IMR-90 (cell line): ENCODE measurements at regions of chr4 and their contacts with region 1.

Region 1: GRCh38 chr4:118417325-118417724 is 64.5 kb upstream of the PRSS12 start:
- DNase-seq: peak; percentile 85
- ATAC-seq: peak; percentile 96
- H3K4me3 ChIP-seq: no peak overlapping the region
- H3K27ac ChIP-seq: peak overlapping the region; percentile 96; the same call in 1 of the 2 replicates
- H3K4me1 ChIP-seq: peaks cover 2% of the 10 kb centered on the region; the same call in 1 of the 2 replicates
- H3K27me3 ChIP-seq: no peaks in the 10 kb centered on the region
- CTCF ChIP-seq: no peak
- POLR2A ChIP-seq: no peak
- RAD21 ChIP-seq: no peak

Region 2: GRCh38 chr4:118278473-118279274 is 138.7 kb before region 1 on chr4:
- CTCF ChIA-PET with region 1: no interaction called
- POLR2A ChIA-PET with region 1: no interaction called
- dilution Hi-C with region 1: no loop called
- in situ Hi-C with region 1: no loop called
- intact Hi-C with region 1: loop called (anchors 5 kb)
- DNase-seq: peak; percentile 88
- ATAC-seq: peak; percentile 87
- H3K4me3 ChIP-seq: peak overlapping the region; percentile 72
- H3K27ac ChIP-seq: peak overlapping the region; percentile 71
- H3K4me1 ChIP-seq: peaks cover 8% of the 10 kb centered on the region
- H3K27me3 ChIP-seq: no peaks in the 10 kb centered on the region
- CTCF ChIP-seq: no peak
- POLR2A ChIP-seq: peak; percentile 98
- RAD21 ChIP-seq: no peak

Region 3: DNA sequence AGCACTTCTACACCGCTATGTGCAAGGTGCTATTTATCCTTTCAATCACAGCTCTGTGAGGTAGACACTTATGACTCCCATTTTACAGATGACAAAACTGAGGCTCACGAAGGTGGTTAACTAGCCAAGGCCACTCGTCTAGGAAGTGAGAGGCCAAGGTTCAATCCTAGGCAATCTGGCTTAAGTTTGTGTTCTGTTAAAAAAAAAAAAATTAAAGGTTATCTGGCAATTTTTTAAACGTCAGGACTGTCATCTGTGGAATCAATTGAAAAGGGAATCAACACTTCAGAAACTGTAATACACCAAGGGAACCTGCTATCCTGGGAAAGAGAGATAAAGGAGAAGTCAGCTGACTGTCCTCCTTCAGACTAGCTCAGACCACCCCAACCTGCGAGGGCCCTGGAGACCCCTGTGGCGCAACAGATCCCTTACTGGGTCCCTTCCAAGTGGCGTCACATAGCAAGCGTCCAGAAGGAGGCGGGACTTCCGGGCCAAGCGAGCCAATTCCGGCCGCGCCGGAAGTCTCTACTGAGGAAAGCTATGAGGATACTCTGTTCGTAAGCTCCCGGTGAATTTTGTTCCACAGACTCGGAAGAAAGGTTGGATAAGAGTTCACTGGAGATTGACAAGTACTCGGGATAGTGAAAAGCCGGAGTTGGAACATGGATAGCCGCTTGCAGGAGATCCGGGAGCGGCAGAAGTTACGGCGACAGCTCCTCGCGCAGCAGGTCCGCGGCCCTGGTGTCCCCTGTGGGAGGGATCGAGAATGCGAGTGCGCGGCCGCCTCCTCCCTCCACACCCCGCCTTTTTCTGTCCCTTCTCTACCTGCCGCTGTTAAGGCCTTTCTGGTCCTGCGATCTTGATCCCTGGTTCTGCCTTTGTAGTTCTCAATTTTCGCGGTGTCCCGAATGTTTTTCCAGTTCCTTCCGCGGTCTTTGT is 267.8 kb after region 1 on chr4 and contains the start of gene METTL14:
- CTCF ChIA-PET with region 1: no interaction called
- POLR2A ChIA-PET with region 1: no interaction called
- dilution Hi-C with region 1: no loop called
- in situ Hi-C with region 1: no loop called
- intact Hi-C with region 1: loop called (anchors 10 kb)
- DNase-seq: peak; percentile 87
- ATAC-seq: peak; percentile 97
- H3K4me3 ChIP-seq: peak within 1 kb of the TSS; percentile 97
- H3K27ac ChIP-seq: peak within 1 kb of the TSS; percentile 88
- H3K4me1 ChIP-seq: no peaks in the 10 kb centered on the region
- H3K27me3 ChIP-seq: no peaks in the 10 kb centered on the region
- CTCF ChIP-seq: 0 out of 2 replicates have a peak, but pooled peaks have one; percentile 2
- POLR2A ChIP-seq: no peak
- RAD21 ChIP-seq: no peak
- total RNA-seq, gene METTL14: 5.0 and 7.5 TPM in 2 replicates